Activated T-helper 1 cell treated with anti-CD3 and anti-CD28 coated beads, Interleukin-12 subunit alpha, Interleukin-12 subunit beta, Interleukin-2, Interleukin-4 antibody, amounts not matched to agents 30 ng/mL and 10 ng/mL and 1 ng/mL, durations not matched to agents 14 hours and 24 hours and 36 hours (primary cell): ENCODE measurements at regions of chr17 and their contacts with region 1.

Region 1: GRCh38 chr17:60392042-60392844 is at the start of gene USP32:
- DNase-seq: peak; percentile 97
- H3K4me3 Mint-ChIP-seq: peak within 1 kb of the TSS; percentile 97
- H3K27ac Mint-ChIP-seq: peak within 1 kb of the TSS; percentile 95
- H3K4me1 Mint-ChIP-seq: peaks cover 50% of the 10 kb centered on the region
- H3K27me3 Mint-ChIP-seq: no peaks in the 10 kb centered on the region
- total RNA-seq, gene USP32: 30.5 and 31.2 TPM in 2 replicates

Region 2: GRCh38 chr17:59106463-59107305 is 1285.6 kb before region 1 on chr17 and contains the start of gene TRIM37:
- intact Hi-C with region 1: loop called (anchors 5 kb)
- DNase-seq: peak; percentile 100
- H3K4me3 Mint-ChIP-seq: peak within 1 kb of the TSS; percentile 97
- H3K27ac Mint-ChIP-seq: peak within 1 kb of the TSS; percentile 90
- H3K4me1 Mint-ChIP-seq: peaks cover 66% of the 10 kb centered on the region
- H3K27me3 Mint-ChIP-seq: peaks cover 1% of the 10 kb centered on the region
- total RNA-seq, gene TRIM37: 27.5 and 27.7 TPM in 2 replicates

Region 3: DNA sequence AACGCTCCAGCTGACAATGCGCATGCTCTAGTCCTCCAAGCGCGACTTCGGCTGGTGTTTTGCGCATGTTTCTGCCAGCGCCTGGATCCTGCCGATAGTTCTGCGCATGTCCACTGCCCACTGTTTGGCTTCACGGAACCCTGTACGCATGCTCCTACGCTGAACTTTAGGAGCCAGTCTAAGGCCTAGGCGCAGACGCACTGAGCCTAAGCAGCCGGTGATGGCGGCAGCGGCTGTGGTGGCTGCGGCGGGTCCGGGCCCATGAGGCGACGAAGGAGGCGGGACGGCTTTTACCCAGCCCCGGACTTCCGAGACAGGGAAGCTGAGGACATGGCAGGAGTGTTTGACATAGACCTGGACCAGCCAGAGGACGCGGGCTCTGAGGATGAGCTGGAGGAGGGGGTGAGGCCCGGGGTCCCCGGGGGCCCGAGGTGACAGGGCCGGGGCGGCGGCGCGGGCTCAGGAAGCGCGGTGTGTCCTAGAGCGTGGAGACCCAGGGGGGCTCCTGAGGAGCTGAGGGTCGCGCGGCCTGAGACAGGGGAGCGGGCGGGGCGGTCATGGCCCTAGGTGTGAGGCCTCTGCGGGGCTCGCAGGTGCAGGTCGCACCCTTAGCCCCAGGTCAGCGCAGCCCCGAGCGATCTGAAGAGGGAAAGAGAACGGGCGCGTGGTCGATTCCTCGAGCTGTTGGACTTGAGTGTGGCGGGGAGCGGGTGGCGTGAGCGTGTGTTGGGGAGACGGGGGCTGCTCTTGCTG is 499.1 kb before region 1 on chr17 and contains the starts of genes RPS6KB1 and TUBD1:
- intact Hi-C with region 1: loop called (anchors 2 kb)
- DNase-seq: peak; percentile 98
- H3K4me3 Mint-ChIP-seq: peak within 1 kb of the TSS; percentile 100
- H3K27ac Mint-ChIP-seq: peak within 1 kb of the TSS; percentile 99
- H3K4me1 Mint-ChIP-seq: peaks cover 58% of the 10 kb centered on the region
- H3K27me3 Mint-ChIP-seq: peaks cover 3% of the 10 kb centered on the region
- total RNA-seq, gene RPS6KB1: 67.6 and 82.7 TPM in 2 replicates
- total RNA-seq, gene TUBD1: 12.3 and 13.2 TPM in 2 replicates

Region 4: GRCh38 chr17:60193482-60193881 is 198.8 kb before region 1 on chr17:
- intact Hi-C with region 1: no loop called
- DNase-seq: no peak
- H3K4me3 Mint-ChIP-seq: no peak overlapping the region
- H3K27ac Mint-ChIP-seq: no peak overlapping the region
- H3K4me1 Mint-ChIP-seq: no peaks in the 10 kb centered on the region
- H3K27me3 Mint-ChIP-seq: no peaks in the 10 kb centered on the region

Region 5: GRCh38 chr17:60293580-60294335 is 98.5 kb before region 1 on chr17:
- intact Hi-C with region 1: no loop called
- DNase-seq: no peak
- H3K4me3 Mint-ChIP-seq: no peak overlapping the region
- H3K27ac Mint-ChIP-seq: no peak overlapping the region
- H3K4me1 Mint-ChIP-seq: no peaks in the 10 kb centered on the region
- H3K27me3 Mint-ChIP-seq: no peaks in the 10 kb centered on the region

Region 6: GRCh38 chr17:60355663-60356594 is 36.3 kb before region 1 on chr17:
- intact Hi-C with region 1: loop called (anchors 1 kb)
- DNase-seq: no peak
- H3K4me3 Mint-ChIP-seq: peak overlapping the region; percentile 47
- H3K27ac Mint-ChIP-seq: peak overlapping the region; percentile 85
- H3K4me1 Mint-ChIP-seq: peaks cover 32% of the 10 kb centered on the region
- H3K27me3 Mint-ChIP-seq: no peaks in the 10 kb centered on the region

Region 7: GRCh38 chr17:60525685-60526514 is 133.7 kb after region 1 on chr17 and contains the start of gene APPBP2:
- intact Hi-C with region 1: loop called (anchors 1 kb)
- DNase-seq: peak; percentile 69
- H3K4me3 Mint-ChIP-seq: peak within 1 kb of the TSS; percentile 98
- H3K27ac Mint-ChIP-seq: peak within 1 kb of the TSS; percentile 96
- H3K4me1 Mint-ChIP-seq: peaks cover 49% of the 10 kb centered on the region
- H3K27me3 Mint-ChIP-seq: no peaks in the 10 kb centered on the region
- total RNA-seq, gene APPBP2: 23.4 and 28.1 TPM in 2 replicates

Region 8: DNA sequence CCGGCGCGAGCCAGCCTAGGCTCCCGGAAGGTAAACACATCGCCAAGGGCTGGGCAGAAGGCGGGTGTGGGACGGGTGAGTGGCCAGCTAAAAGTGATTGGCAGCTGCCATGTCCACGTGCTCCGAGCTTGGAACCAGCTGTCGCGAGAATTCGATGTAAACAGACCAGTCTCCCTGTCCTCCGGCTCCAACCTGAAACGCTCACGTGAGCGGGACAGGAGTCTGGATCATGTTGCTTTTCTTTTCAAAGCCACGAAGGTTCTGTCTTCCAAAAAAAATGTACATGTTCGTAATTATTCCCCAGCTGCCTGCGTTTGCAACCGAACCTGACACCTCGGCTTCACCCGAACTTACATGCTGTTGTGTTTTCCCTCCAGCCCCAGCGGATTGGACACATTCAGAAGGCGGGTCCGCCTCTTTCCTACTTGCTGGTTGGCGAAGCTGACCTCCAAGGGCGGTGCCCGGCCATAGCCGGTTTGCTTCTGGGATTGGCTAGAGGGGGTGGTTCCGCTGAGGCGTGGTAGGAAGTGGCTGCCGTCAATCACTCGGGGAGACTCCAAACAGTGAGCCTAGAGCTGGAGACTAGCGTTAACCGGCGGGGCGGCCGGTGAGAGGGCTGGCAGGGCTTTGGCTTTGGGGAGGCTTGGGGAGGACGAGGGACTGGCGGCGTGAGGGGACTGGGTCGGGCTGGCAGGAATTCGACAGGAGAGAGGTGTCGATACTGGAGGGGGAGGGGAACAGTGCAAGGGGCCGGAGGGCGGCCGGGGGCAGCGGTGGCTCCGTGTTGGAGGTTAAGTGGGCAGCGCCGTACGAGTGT is 285.3 kb after region 1 on chr17 and contains the start of gene BCAS3:
- intact Hi-C with region 1: loop called (anchors 1 kb)
- DNase-seq: peak; percentile 97
- H3K4me3 Mint-ChIP-seq: peak within 1 kb of the TSS; percentile 89
- H3K27ac Mint-ChIP-seq: peak within 1 kb of the TSS; percentile 62
- H3K4me1 Mint-ChIP-seq: peaks cover 19% of the 10 kb centered on the region
- H3K27me3 Mint-ChIP-seq: no peaks in the 10 kb centered on the region
- total RNA-seq, gene BCAS3: 8.3 and 8.5 TPM in 2 replicates